Right ventricle myocardium inferior (tissue), 1 donor: ENCODE measurements at regions of chr6 and their contacts with region 1.

Region 1: DNA sequence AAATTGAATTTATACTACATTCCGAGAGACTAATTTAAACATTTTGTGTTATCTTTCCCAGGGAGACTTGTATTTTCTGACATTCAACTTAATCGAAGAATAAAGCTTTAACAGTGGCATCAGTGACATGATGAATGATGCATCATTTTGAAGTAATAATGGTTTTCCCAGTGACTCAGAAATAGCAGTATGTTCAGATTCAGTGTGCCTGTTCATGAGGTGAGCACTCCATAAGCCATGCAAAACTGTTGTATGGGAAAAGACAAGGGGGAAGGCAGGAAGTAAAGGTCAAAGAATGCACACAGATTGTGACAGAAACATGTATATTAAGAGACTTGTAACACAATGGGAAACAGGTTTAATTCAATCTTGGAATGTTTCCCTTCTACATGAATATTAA is 1348.2 kb upstream of the GJE1 start:
- DNase-seq: no peak
- ATAC-seq: no peak

Region 2: DNA sequence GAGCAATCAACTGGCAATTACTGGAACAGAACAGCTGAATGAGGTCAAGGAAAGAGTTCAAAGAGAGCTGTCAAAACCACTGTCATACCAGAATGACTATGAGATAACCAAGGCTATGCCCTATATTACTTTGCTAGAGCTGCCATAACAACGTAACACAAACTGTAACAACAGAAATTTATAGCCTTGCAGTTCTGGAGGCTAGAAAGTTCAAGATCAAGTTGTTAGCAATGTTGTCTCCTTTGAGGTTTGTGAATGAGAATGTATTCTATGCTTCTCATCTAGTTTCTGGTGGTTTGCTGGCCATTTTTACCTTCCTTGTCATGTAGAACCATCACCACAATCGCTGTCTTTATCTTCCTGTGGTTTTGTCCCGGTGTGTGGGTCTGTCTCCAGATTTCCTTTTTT is 25.1 kb after region 1 on chr6:
- intact Hi-C with region 1: loop called (anchors 2 kb)
- DNase-seq: no peak
- ATAC-seq: peak; percentile 54

Region 3: DNA sequence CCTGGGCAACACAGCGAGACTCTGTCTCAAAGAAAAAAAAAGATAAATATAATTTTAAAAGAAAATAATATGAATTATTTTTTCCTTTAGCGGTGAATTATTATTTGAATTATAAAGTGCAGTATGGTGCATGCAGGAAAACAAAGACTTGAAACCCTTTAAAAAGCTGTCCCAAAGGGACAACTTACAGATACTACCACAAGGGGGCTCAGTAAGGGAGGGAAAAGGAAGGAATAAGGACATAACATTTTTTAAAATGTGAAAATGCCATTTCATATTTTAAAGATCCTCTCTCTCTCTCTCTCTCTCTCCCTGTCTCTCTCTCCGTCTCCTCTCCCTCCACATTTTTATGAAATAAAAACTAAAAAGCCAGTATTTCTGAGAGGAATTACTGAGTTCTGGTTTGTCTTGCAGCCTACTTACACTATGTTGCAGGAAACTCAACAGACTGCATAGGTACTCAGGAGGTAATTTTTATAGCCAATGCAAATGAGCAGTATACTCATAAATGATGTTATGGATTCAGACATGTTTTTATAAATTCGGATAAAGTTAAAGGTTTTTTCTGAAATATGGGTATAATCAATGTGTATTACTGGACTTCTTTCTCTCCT is 893.1 kb after region 1 on chr6:
- intact Hi-C with region 1: loop called (anchors 10 kb)
- DNase-seq: no peak
- ATAC-seq: no peak